ENCODE measurements at regions of chr1 and their contacts with region 1.

Region 1: GRCh38 chr1:154870115-154870571 is at the start of gene KCNN3:
- DNase-seq: peak; percentile 89 to 96 (median 95)
- H3K4me3 ChIP-seq: peak within 1 kb of the TSS; percentile 36
- H3K27ac ChIP-seq: no peak within 1 kb of the TSS
- H3K4me1 ChIP-seq: peaks cover 8% of the 10 kb centered on the region
- H3K27me3 ChIP-seq: no peaks in the 10 kb centered on the region
- CTCF ChIP-seq: no peak
- EP300 ChIP-seq: no peak
- POLR2A ChIP-seq: no peak
- total RNA-seq, gene KCNN3: 0.71 to 6.0 (median 1.7) TPM

Region 2: GRCh38 chr1:154567386-154568156 is 302.6 kb before region 1 on chr1 and contains the start of gene CHRNB2:
- intact Hi-C with region 1: loop called in 2 of 4 experiments (anchors 5 to 10 kb)
- DNase-seq: peak; percentile 63 to 87 (median 77)
- H3K4me3 ChIP-seq: no peak within 1 kb of the TSS
- H3K27ac ChIP-seq: no peak within 1 kb of the TSS
- H3K4me1 ChIP-seq: peaks cover 6% of the 10 kb centered on the region
- H3K27me3 ChIP-seq: no peaks in the 10 kb centered on the region
- CTCF ChIP-seq: no peak
- EP300 ChIP-seq: no peak
- POLR2A ChIP-seq: no peak
- total RNA-seq, gene CHRNB2: 0.08 to 0.25 (median 0.23) TPM in 4 of 7 donors, not detected in the others